AG04450 (cell line): ENCODE measurements at regions of chr3 and their contacts with region 1.

Region 1: GRCh38 chr3:159260049-159260662 is 458.3 kb downstream of the MFSD1 start:
- DNase-seq: peak; percentile 68
- H3K4me3 ChIP-seq: no peak overlapping the region
- H3K27ac ChIP-seq: no peak overlapping the region
- H3K27me3 ChIP-seq: peaks cover 2% of the 10 kb centered on the region
- CTCF ChIP-seq: peak; percentile 75

Region 2: GRCh38 chr3:158801696-158802408 is 458.3 kb before region 1 on chr3 and contains the start of gene MFSD1:
- CTCF ChIA-PET with region 1: interaction called, 17 read pairs
- POLR2A ChIA-PET with region 1: interaction called, 3 read pairs
- DNase-seq: peak; percentile 67
- H3K4me3 ChIP-seq: peak within 1 kb of the TSS; percentile 79
- H3K27ac ChIP-seq: peak within 1 kb of the TSS; percentile 74
- H3K27me3 ChIP-seq: no peaks in the 10 kb centered on the region
- CTCF ChIP-seq: no peak
- polyA plus RNA-seq, gene MFSD1: 69.6 and 89.9 TPM in 2 replicates

Region 3: GRCh38 chr3:158845765-158846350 is 414.3 kb before region 1 on chr3:
- CTCF ChIA-PET with region 1: interaction called, 153 read pairs
- POLR2A ChIA-PET with region 1: no interaction called
- DNase-seq: no peak
- H3K4me3 ChIP-seq: no peak overlapping the region
- H3K27ac ChIP-seq: no peak overlapping the region
- H3K27me3 ChIP-seq: no peaks in the 10 kb centered on the region
- CTCF ChIP-seq: peak; percentile 72

Region 4: DNA sequence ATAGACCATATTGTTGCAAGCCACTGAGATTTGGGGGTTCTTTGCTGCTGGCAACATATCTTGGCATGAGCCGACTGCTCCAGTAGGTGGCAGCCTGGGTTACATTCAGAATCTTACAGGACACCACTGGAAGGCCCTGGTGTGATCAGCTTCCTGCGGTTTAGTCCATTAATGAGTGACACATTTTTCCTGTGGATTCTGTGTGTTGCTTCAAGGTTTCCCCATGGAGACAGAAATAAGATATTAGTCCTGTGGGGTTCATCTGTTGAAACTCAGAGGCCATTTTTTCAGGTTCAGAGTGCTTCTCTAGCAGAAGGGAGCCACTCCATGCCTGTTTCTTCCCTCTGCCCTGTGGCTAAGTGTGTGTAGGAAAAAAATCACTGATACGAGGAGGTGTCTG is 342.1 kb before region 1 on chr3:
- CTCF ChIA-PET with region 1: interaction called, 44 read pairs
- POLR2A ChIA-PET with region 1: no interaction called
- DNase-seq: no peak
- H3K4me3 ChIP-seq: no peak overlapping the region
- H3K27ac ChIP-seq: no peak overlapping the region
- H3K27me3 ChIP-seq: no peaks in the 10 kb centered on the region
- CTCF ChIP-seq: peak; percentile 76

Region 5: GRCh38 chr3:159102001-159102400 is 158.2 kb before region 1 on chr3:
- CTCF ChIA-PET with region 1: no interaction called
- POLR2A ChIA-PET with region 1: no interaction called
- DNase-seq: no peak
- H3K4me3 ChIP-seq: no peak overlapping the region
- H3K27ac ChIP-seq: no peak overlapping the region
- H3K27me3 ChIP-seq: no peaks in the 10 kb centered on the region
- CTCF ChIP-seq: no peak

Region 6: GRCh38 chr3:159586571-159587202 is 326.5 kb after region 1 on chr3:
- CTCF ChIA-PET with region 1: interaction called, 30 read pairs
- POLR2A ChIA-PET with region 1: no interaction called
- DNase-seq: peak; percentile 11
- H3K4me3 ChIP-seq: no peak overlapping the region
- H3K27ac ChIP-seq: no peak overlapping the region
- H3K27me3 ChIP-seq: peaks cover 3% of the 10 kb centered on the region
- CTCF ChIP-seq: peak; percentile 77